ENCODE measurements at regions of chr1 and their contacts with region 1.

Region 1: DNA sequence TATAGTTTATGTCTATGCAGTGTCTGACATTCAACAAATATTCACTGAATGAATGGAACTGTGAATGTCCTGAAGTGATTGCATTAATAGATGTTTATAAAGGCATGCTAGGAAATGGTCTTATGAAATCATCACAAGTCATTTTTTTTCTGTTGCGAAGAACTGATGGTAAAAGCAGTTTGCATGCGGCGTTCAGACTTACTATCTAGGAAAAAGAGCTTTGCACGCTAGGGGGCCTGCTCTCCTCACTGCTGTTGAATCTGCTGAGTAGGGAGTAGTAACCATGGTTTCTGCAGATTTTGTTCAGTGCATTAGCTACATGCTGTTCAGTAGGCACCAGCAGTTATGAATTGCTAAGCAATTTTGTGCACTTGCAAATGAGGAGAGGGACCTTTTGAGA is 57.9 kb downstream of the CENPF start:
- DNase-seq: peak in 1 of 2 experiments; percentile 43
- ATAC-seq: peak; percentile 73 to 82; a peak in 3 of 6 replicates
- H3K4me3 ChIP-seq: no peak overlapping the region
- H3K27ac ChIP-seq: no peak overlapping the region
- H3K4me1 ChIP-seq: no peaks in the 10 kb centered on the region
- CTCF ChIP-seq: peak; percentile 45; the same call in 2 of the 3 replicates
- EP300 ChIP-seq: no peak
- POLR2A ChIP-seq: no peak
- RAD21 ChIP-seq: peak; percentile 55 to 58

Region 2: GRCh38 chr1:214648801-214649200 is 12.1 kb before region 1 on chr1:
- CTCF ChIA-PET with region 1: interaction called, 19 read pairs
- POLR2A ChIA-PET with region 1: no interaction called
- DNase-seq: no peak
- ATAC-seq: no peak
- H3K4me3 ChIP-seq: no peak overlapping the region
- H3K27ac ChIP-seq: no peak overlapping the region
- H3K4me1 ChIP-seq: no peaks in the 10 kb centered on the region
- CTCF ChIP-seq: no peak
- EP300 ChIP-seq: no peak
- POLR2A ChIP-seq: no peak
- RAD21 ChIP-seq: no peak

Region 3: GRCh38 chr1:214676747-214677146 is 15.9 kb after region 1 on chr1:
- CTCF ChIA-PET with region 1: no interaction called
- POLR2A ChIA-PET with region 1: no interaction called
- DNase-seq: no peak
- ATAC-seq: no peak
- H3K4me3 ChIP-seq: no peak overlapping the region
- H3K27ac ChIP-seq: no peak overlapping the region
- H3K4me1 ChIP-seq: no peaks in the 10 kb centered on the region
- CTCF ChIP-seq: no peak
- EP300 ChIP-seq: no peak
- POLR2A ChIP-seq: no peak
- RAD21 ChIP-seq: no peak

Region 4: DNA sequence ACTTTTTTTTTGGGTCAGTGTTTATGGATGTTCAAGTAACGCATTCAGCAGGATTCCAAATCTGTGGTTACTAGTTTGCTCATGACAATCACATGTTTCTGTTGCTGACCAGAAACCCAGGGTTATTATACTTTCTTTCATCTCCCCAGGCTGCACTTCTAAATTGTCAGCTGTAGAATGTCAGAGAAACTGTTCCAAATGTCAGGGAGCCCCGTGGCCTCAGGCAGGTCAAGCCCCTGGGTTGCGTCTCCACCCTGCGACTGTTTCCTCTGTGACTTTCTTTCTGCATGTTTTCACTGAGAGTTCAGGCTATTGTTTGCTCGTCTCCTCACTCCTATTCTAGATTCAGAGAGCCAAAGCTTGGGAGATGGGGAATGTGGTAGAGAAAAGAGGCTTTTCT is 39.5 kb after region 1 on chr1:
- CTCF ChIA-PET with region 1: no interaction called
- POLR2A ChIA-PET with region 1: no interaction called
- DNase-seq: no peak
- ATAC-seq: no peak
- H3K4me3 ChIP-seq: no peak overlapping the region
- H3K27ac ChIP-seq: no peak overlapping the region
- H3K4me1 ChIP-seq: no peaks in the 10 kb centered on the region
- CTCF ChIP-seq: no peak
- EP300 ChIP-seq: no peak
- POLR2A ChIP-seq: no peak
- RAD21 ChIP-seq: no peak

Region 5: GRCh38 chr1:214739621-214740238 is 78.9 kb after region 1 on chr1:
- CTCF ChIA-PET with region 1: no interaction called
- POLR2A ChIA-PET with region 1: no interaction called
- DNase-seq: no peak
- ATAC-seq: no peak
- H3K4me3 ChIP-seq: no peak overlapping the region
- H3K27ac ChIP-seq: no peak overlapping the region
- H3K4me1 ChIP-seq: no peaks in the 10 kb centered on the region
- CTCF ChIP-seq: no peak
- EP300 ChIP-seq: no peak
- POLR2A ChIP-seq: no peak
- RAD21 ChIP-seq: no peak

Region 6: DNA sequence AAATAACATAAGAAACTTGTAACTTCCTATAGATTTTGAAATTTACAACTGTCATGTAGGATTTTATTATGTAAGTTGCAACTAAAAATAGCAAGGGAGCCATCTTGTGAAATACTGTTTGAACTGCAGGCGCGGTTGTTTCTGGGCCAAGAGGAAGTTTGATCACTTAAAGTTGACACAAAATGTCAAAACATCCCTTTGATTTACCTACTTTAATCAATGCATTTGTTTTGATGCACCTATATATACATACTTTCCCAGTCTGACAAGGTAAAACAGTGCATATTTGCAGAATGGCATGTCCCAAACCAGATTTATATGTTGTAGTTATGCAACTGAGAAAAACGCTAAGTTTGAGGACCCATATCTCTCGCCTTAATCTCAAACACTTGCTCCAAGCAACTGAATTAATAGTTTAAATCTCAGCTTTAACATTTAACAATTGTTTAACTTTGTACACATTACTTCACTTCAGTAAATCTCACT is 485.5 kb after region 1 on chr1:
- CTCF ChIA-PET with region 1: interaction called, 39 read pairs
- POLR2A ChIA-PET with region 1: no interaction called
- DNase-seq: peak in 1 of 2 experiments; percentile 35
- ATAC-seq: 0 out of 6 replicates have a peak, but pooled peaks of 1 of the 2 experiments have one; percentile 39
- H3K4me3 ChIP-seq: no peak overlapping the region
- H3K27ac ChIP-seq: no peak overlapping the region
- H3K4me1 ChIP-seq: no peaks in the 10 kb centered on the region
- CTCF ChIP-seq: peak; percentile 48; the same call in 2 of the 3 replicates
- EP300 ChIP-seq: no peak
- POLR2A ChIP-seq: no peak
- RAD21 ChIP-seq: peak; percentile 66 to 75

Region 7: DNA sequence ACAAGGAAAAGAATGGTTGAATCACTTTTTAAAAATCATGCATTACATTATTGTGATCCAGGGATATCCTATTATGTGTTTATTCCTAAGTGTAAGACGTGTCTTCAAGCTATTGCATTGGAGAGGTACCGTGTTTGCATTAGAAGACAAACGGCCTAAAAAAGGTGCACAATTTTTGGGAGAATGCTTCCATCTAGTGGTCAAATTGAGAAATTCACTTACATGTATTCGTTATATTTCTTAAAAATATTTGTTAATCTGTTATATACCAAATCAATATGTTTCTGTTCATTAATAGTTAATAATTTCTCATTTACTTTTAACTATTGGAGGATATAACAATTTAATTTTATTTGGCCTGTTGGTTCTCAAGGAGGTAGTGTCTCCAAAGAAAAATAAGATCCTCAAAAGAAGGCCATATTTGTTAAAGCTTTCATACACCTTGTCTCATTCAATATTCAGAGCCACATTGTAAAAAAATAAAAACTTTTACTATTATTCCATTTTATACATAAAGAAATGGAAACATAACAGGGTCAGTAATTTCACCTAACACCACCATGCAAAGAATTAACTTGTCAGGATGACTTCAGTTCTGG is 865.8 kb after region 1 on chr1:
- CTCF ChIA-PET with region 1: interaction called, 30 read pairs
- POLR2A ChIA-PET with region 1: no interaction called
- DNase-seq: peak in 1 of 2 experiments; percentile 52
- ATAC-seq: peak; percentile 66 to 77; a peak in 4 of 6 replicates
- H3K4me3 ChIP-seq: no peak overlapping the region
- H3K27ac ChIP-seq: no peak overlapping the region
- H3K4me1 ChIP-seq: no peaks in the 10 kb centered on the region
- CTCF ChIP-seq: peak; percentile 78
- EP300 ChIP-seq: no peak
- POLR2A ChIP-seq: no peak
- RAD21 ChIP-seq: peak; percentile 84 to 87

Measured in A549 (cell line).